Stomach (tissue), 19 donors: ENCODE measurements at regions of chr1 and their contacts with region 1.

Region 1: GRCh38 chr1:152440635-152441471 is 26.8 kb upstream of the CRNN start:
- DNase-seq: peak; percentile 73 to 87
- H3K4me3 ChIP-seq: no peak overlapping the region
- H3K27ac ChIP-seq: no peak overlapping the region
- H3K4me1 ChIP-seq: peaks cover 0 to 14% (median 6%) of the 10 kb centered on the region in 4 donors
- H3K27me3 ChIP-seq: no peaks in the 10 kb centered on the region
- CTCF ChIP-seq: peak in 5 of 7 experiments; percentile 67 to 83 (median 71)
- EP300 ChIP-seq: no peak
- POLR2A ChIP-seq: no peak

Region 2: DNA sequence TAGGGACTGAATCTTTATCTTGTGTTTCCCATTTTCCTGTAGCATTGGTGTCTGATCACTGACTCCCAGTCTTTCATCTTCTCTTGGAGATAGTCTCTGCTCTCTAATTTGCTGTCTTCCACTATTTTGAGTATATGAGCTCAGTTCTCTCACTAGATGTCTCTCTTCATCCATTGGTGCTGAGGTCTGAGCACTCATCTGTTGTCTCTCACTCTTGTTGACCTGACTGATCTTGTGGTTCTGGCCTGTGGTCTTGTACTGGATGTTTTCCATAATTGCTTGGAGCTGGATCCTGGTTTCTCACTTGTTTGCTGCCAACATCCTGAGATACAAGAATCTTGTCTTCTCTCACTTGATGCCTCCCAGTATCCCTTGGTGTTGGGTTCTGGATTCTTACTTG is 378.9 kb before region 1 on chr1:
- intact Hi-C with region 1: loop called (anchors 10 kb)
- DNase-seq: no peak
- H3K4me3 ChIP-seq: no peak overlapping the region
- H3K27ac ChIP-seq: no peak overlapping the region
- H3K4me1 ChIP-seq: no peaks in the 10 kb centered on the region
- H3K27me3 ChIP-seq: peaks cover 0 to 55% (median 0%) of the 10 kb centered on the region in 3 donors
- CTCF ChIP-seq: no peak
- EP300 ChIP-seq: no peak
- POLR2A ChIP-seq: no peak

Region 3: DNA sequence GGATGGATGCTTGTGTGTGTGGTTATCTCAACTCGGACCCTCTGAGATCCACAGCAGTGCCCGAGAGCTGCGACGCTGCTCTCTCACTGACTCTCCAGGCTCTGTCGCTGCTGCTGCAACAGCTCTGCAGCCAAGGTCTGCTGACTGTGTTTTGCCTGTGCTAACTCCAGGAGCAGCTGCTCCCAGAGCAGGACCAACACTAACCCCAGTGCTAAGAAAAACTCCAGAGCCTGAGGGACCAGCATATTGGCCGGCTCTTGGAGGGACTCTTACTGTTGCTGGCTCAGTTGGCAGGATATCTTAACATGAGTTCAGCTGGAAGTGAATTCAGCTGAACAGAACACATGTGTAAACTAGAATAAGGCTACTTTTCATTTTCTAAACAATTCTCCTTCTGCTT is 238.6 kb after region 1 on chr1:
- intact Hi-C with region 1: no loop called
- DNase-seq: peak in 1 of 2 donors; percentile 26
- H3K4me3 ChIP-seq: no peak overlapping the region
- H3K27ac ChIP-seq: no peak overlapping the region
- H3K4me1 ChIP-seq: no peaks in the 10 kb centered on the region
- H3K27me3 ChIP-seq: peaks cover 0 to 4% (median 0%) of the 10 kb centered on the region in 3 donors
- CTCF ChIP-seq: no peak
- EP300 ChIP-seq: no peak
- POLR2A ChIP-seq: no peak